Naive thymus-derived CD4-positive, alpha-beta T cell (primary cell): ENCODE measurements at regions of chr2 and their contacts with region 1.

Region 1: DNA sequence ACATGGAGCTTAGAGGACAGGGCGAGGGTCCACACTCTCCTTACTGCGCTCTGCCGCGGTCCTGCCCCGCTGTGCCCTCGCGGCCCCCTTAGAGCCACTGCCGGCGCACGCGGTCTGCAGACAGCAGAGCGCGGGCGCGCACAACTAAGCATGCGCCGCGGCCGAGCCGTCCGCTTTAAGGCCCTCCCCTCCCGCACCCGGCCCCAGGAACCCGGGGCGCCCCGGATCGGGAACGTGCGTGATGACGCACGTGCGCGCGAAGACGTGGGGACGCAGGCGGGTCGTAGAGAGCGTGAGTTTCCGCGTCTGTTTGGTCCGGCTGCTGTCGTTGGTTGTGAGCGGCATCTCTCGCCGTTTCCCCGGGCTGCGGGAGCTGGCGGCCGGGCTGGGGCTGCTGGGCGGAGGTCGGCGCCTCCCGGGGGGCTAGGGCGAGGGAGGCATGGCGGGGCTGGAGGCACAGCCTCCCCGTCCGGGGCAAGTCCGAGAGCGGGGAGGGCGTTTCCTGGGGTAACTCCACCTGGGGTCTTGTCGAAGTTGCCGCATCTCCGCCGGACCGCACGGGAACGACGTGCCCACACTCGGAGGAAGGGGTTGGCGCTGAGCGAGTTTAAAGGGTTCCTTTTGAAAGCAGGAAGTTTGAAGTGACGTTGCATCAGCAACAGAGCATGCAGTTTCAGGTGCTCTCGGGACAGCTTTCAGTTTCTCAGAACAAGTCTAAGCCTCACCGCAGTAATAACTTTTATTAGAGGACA is at the start of gene RHBDD1:
- DNase-seq: peak; percentile 88 to 96 (median 94)
- ATAC-seq: peak; percentile 94
- H3K4me3 ChIP-seq: peak within 1 kb of the TSS; percentile 82
- H3K4me3 Mint-ChIP-seq: peak within 1 kb of the TSS; percentile 85 to 99 (median 97)
- H3K27ac ChIP-seq: peak within 1 kb of the TSS; percentile 99
- H3K27ac Mint-ChIP-seq: peak within 1 kb of the TSS; percentile 95 to 100 (median 100)
- H3K4me1 ChIP-seq: peaks cover 27 to 45% of the 10 kb centered on the region in 2 donors
- H3K4me1 Mint-ChIP-seq: peaks cover 20 to 67% (median 64%) of the 10 kb centered on the region in 7 donors
- H3K27me3 ChIP-seq: no peaks in the 10 kb centered on the region
- H3K27me3 Mint-ChIP-seq: no peaks in the 10 kb centered on the region
- total RNA-seq, gene RHBDD1: 42.9 to 70.8 (median 62.1) TPM

Region 2: GRCh38 chr2:224922142-224922727 is 1913.7 kb before region 1 on chr2:
- CTCF ChIA-PET with region 1: no interaction called
- POLR2A ChIA-PET with region 1: no interaction called
- intact Hi-C with region 1: loop called in 1 of 2 experiments (anchors 10 kb)
- DNase-seq: no peak
- ATAC-seq: peak; percentile 55
- H3K4me3 ChIP-seq: no peak overlapping the region
- H3K4me3 Mint-ChIP-seq: peak overlapping the region in 2 of 10 donors; percentile 15 to 17
- H3K27ac ChIP-seq: peak overlapping the region; percentile 44
- H3K27ac Mint-ChIP-seq: peak overlapping the region; percentile 26 to 99 (median 82)
- H3K4me1 ChIP-seq: peaks cover 35 to 52% of the 10 kb centered on the region in 2 donors
- H3K4me1 Mint-ChIP-seq: peaks cover 36 to 55% (median 50%) of the 10 kb centered on the region in 7 donors
- H3K27me3 ChIP-seq: no peaks in the 10 kb centered on the region
- H3K27me3 Mint-ChIP-seq: no peaks in the 10 kb centered on the region

Region 3: GRCh38 chr2:225464346-225465025 is 1371.5 kb before region 1 on chr2:
- CTCF ChIA-PET with region 1: no interaction called
- POLR2A ChIA-PET with region 1: no interaction called
- intact Hi-C with region 1: loop called in 1 of 2 experiments (anchors 1 kb)
- DNase-seq: peak in 6 of 9 donors; percentile 16 to 48 (median 38)
- ATAC-seq: peak; percentile 67
- H3K4me3 ChIP-seq: peak overlapping the region; percentile 40
- H3K4me3 Mint-ChIP-seq: peak overlapping the region; percentile 81 to 93 (median 86)
- H3K27ac ChIP-seq: no peak overlapping the region
- H3K27ac Mint-ChIP-seq: peak overlapping the region; percentile 76 to 96 (median 86)
- H3K4me1 ChIP-seq: peaks cover 7 to 8% of the 10 kb centered on the region in 2 donors
- H3K4me1 Mint-ChIP-seq: peaks cover 11 to 40% (median 22%) of the 10 kb centered on the region in 7 donors
- H3K27me3 ChIP-seq: no peaks in the 10 kb centered on the region
- H3K27me3 Mint-ChIP-seq: peaks cover 0 to 6% (median 0%) of the 10 kb centered on the region in 5 donors

Region 4: DNA sequence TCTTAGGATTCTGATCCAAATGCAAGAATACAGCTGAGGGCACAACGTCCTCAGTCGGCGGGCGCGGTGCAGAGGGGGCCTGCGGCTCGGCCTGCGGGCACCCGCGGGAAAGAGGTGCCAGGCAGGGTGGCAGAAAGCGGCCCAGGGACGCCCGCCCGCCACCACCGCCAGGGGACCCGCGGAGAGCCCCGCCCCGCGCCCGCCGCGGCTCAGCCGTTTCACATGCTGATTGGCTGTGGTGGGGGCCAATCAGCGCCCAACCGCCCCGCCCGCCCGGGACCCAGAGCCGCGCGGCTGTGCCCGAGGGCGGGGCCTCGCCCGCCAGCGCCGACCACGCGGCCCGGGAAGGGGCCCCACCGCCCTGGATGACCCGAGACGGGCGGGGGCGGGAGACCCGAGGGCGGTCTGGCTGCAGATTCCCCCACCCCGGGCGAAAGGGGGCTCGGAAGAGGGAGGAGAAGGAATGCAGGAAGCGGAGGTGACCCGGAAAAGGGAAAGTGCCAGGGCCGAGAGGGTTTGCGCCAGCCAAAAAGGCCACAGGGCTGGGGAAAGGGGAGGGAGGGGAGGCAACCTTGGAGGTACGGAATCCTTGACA is 44.4 kb before region 1 on chr2:
- CTCF ChIA-PET with region 1: no interaction called
- POLR2A ChIA-PET with region 1: interaction called, 28 read pairs
- intact Hi-C with region 1: loop called (anchors 1 kb)
- DNase-seq: peak; percentile 88 to 96 (median 94)
- ATAC-seq: peak; percentile 97
- H3K4me3 ChIP-seq: peak overlapping the region; percentile 79
- H3K4me3 Mint-ChIP-seq: peak overlapping the region; percentile 92 to 99 (median 97)
- H3K27ac ChIP-seq: peak overlapping the region; percentile 97
- H3K27ac Mint-ChIP-seq: peak overlapping the region; percentile 99 to 100 (median 99)
- H3K4me1 ChIP-seq: peaks cover 8 to 12% of the 10 kb centered on the region in 2 donors
- H3K4me1 Mint-ChIP-seq: peaks cover 5 to 61% (median 41%) of the 10 kb centered on the region in 7 donors
- H3K27me3 ChIP-seq: no peaks in the 10 kb centered on the region
- H3K27me3 Mint-ChIP-seq: no peaks in the 10 kb centered on the region

Region 5: GRCh38 chr2:226855766-226856165 is 19.8 kb after region 1 on chr2:
- CTCF ChIA-PET with region 1: no interaction called
- POLR2A ChIA-PET with region 1: interaction called, 5 read pairs
- intact Hi-C with region 1: loop called in 1 of 2 experiments (anchors 2 kb)
- DNase-seq: no peak
- ATAC-seq: no peak
- H3K4me3 ChIP-seq: no peak overlapping the region
- H3K4me3 Mint-ChIP-seq: no peak overlapping the region
- H3K27ac ChIP-seq: no peak overlapping the region
- H3K27ac Mint-ChIP-seq: no peak overlapping the region
- H3K4me1 ChIP-seq: no peaks in the 10 kb centered on the region
- H3K4me1 Mint-ChIP-seq: peaks cover 7 to 35% (median 23%) of the 10 kb centered on the region in 7 donors
- H3K27me3 ChIP-seq: no peaks in the 10 kb centered on the region
- H3K27me3 Mint-ChIP-seq: no peaks in the 10 kb centered on the region

Region 6: GRCh38 chr2:226934546-226935201 is 98.7 kb after region 1 on chr2:
- CTCF ChIA-PET with region 1: no interaction called
- POLR2A ChIA-PET with region 1: no interaction called
- intact Hi-C with region 1: no loop called
- DNase-seq: no peak
- ATAC-seq: no peak
- H3K4me3 ChIP-seq: no peak overlapping the region
- H3K4me3 Mint-ChIP-seq: no peak overlapping the region
- H3K27ac ChIP-seq: no peak overlapping the region
- H3K27ac Mint-ChIP-seq: no peak overlapping the region
- H3K4me1 ChIP-seq: no peaks in the 10 kb centered on the region
- H3K4me1 Mint-ChIP-seq: peaks cover 0 to 4% (median 0%) of the 10 kb centered on the region in 7 donors
- H3K27me3 ChIP-seq: no peaks in the 10 kb centered on the region
- H3K27me3 Mint-ChIP-seq: no peaks in the 10 kb centered on the region

Region 7: GRCh38 chr2:227324995-227325838 is 489.2 kb after region 1 on chr2 and contains the start of gene MFF:
- CTCF ChIA-PET with region 1: no interaction called
- POLR2A ChIA-PET with region 1: no interaction called
- intact Hi-C with region 1: loop called (anchors 1 kb)
- DNase-seq: peak; percentile 82 to 93 (median 93)
- ATAC-seq: peak; percentile 99
- H3K4me3 ChIP-seq: peak within 1 kb of the TSS; percentile 76
- H3K4me3 Mint-ChIP-seq: peak within 1 kb of the TSS; percentile 91 to 97 (median 96)
- H3K27ac ChIP-seq: peak within 1 kb of the TSS; percentile 92
- H3K27ac Mint-ChIP-seq: peak within 1 kb of the TSS; percentile 83 to 97 (median 95)
- H3K4me1 ChIP-seq: peaks cover 4 to 24% of the 10 kb centered on the region in 2 donors
- H3K4me1 Mint-ChIP-seq: peaks cover 8 to 59% (median 46%) of the 10 kb centered on the region in 7 donors
- H3K27me3 ChIP-seq: no peaks in the 10 kb centered on the region
- H3K27me3 Mint-ChIP-seq: peaks cover 0 to 13% (median 0%) of the 10 kb centered on the region in 5 donors
- total RNA-seq, gene MFF: 51.7 to 64.7 (median 61.8) TPM